ENCODE measurements at regions of chr5 and their contacts with region 1.

Region 1: GRCh38 chr5:133460172-133460758 is 152.1 kb downstream of the FSTL4 start:
- H3K4me3 ChIP-seq: no peak overlapping the region
- H3K27ac ChIP-seq: no peak overlapping the region
- H3K4me1 ChIP-seq: no peaks in the 10 kb centered on the region
- CTCF ChIP-seq: peak; percentile 46; the same call in 1 of the 2 replicates

Region 2: GRCh38 chr5:133323494-133324457 is 136.5 kb before region 1 on chr5:
- CTCF ChIA-PET with region 1: no interaction called
- POLR2A ChIA-PET with region 1: no interaction called
- H3K4me3 ChIP-seq: no peak overlapping the region
- H3K27ac ChIP-seq: no peak overlapping the region
- H3K4me1 ChIP-seq: no peaks in the 10 kb centered on the region
- CTCF ChIP-seq: no peak

Region 3: DNA sequence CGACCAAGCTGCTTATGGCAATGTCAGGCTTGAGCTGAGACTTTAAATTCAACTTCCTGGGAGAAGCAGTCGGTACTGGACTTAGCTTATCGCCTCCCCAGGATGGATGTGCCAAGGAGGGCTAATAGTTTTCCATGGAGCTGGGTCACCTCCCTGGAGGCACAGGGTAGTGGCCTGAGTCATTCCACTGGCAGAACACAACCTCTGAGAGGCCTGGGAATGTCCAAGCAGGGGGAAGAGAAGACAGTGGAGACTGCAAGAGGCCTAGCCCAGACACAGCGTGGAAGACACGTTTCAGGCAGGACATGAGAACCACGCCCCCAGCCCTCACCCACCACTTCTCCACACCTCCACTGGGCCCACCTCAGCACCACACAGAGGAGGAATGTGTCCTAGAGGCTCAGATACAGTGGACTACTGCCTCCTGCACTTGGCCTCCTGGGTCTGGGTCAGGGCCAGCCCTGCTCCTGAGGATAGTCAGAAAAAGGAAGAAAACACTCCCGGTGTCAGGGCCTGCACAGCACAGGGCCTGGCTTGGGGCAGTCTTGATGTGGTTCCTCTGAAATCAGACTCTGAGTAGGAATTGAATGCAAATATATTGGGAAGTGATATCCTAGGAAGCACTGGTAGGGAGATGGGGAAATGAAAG is 19.7 kb before region 1 on chr5:
- CTCF ChIA-PET with region 1: interaction called, 10 read pairs
- POLR2A ChIA-PET with region 1: no interaction called
- H3K4me3 ChIP-seq: no peak overlapping the region
- H3K27ac ChIP-seq: no peak overlapping the region
- H3K4me1 ChIP-seq: no peaks in the 10 kb centered on the region
- CTCF ChIP-seq: no peak

Region 4: DNA sequence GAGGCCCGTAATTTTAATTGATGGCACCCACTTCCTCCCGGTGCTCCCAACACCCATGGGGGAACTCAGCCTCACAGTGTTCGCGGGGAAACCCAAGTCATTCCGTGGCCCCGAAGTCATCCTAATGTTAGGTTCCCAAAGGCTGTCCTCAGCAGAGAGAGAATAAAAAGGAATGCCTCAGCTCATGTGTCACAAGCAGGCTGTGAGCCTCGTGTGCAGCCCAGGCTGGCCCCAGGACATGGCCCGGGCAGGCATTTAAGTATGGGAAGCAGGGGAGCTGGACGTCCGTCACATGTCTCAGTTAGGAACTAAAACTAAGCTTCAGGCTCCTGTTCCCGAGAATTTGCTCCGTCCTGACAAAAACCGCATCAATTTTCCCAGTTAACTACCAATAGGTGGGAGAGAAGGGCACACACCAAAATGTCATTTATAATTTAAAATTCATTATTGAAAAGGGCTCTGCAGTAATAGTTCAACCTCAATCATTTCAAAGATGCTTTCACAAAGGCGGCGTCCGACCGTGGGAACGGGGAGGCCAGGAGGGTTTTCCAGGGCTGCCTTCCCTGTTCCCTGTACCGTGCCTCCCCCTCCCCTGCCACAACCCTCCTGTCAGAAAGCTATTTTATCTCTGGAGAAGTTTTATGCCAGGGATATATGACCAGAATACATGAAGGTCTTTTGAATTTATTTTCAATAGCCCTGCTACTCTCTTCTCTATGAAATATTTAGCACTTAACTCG is 14.8 kb after region 1 on chr5:
- CTCF ChIA-PET with region 1: interaction called, 11 read pairs
- POLR2A ChIA-PET with region 1: no interaction called
- H3K4me3 ChIP-seq: no peak overlapping the region
- H3K27ac ChIP-seq: no peak overlapping the region
- H3K4me1 ChIP-seq: no peaks in the 10 kb centered on the region
- CTCF ChIP-seq: no peak

Measured in HEK293 (cell line).